MCF 10A (cell line): ENCODE measurements at regions of chr12 and their contacts with region 1.

Region 1: GRCh38 chr12:51923501-51924271 is 16.4 kb downstream of the ACVRL1 start:
- DNase-seq: peak; percentile 44
- H3K4me3 Mint-ChIP-seq: no peak overlapping the region
- H3K27ac Mint-ChIP-seq: no peak overlapping the region
- H3K4me1 Mint-ChIP-seq: peaks cover 5% of the 10 kb centered on the region
- H3K27me3 Mint-ChIP-seq: no peaks in the 10 kb centered on the region
- CTCF ChIP-seq: peak; percentile 81

Region 2: GRCh38 chr12:51891843-51892242 is 31.8 kb before region 1 on chr12:
- CTCF ChIA-PET with region 1: interaction called, 15 read pairs
- POLR2A ChIA-PET with region 1: no interaction called
- intact Hi-C with region 1: loop called (anchors 1 kb)
- DNase-seq: no peak
- H3K4me3 Mint-ChIP-seq: no peak overlapping the region
- H3K27ac Mint-ChIP-seq: no peak overlapping the region
- H3K4me1 Mint-ChIP-seq: no peaks in the 10 kb centered on the region
- H3K27me3 Mint-ChIP-seq: no peaks in the 10 kb centered on the region
- CTCF ChIP-seq: peak; percentile 36

Region 3: DNA sequence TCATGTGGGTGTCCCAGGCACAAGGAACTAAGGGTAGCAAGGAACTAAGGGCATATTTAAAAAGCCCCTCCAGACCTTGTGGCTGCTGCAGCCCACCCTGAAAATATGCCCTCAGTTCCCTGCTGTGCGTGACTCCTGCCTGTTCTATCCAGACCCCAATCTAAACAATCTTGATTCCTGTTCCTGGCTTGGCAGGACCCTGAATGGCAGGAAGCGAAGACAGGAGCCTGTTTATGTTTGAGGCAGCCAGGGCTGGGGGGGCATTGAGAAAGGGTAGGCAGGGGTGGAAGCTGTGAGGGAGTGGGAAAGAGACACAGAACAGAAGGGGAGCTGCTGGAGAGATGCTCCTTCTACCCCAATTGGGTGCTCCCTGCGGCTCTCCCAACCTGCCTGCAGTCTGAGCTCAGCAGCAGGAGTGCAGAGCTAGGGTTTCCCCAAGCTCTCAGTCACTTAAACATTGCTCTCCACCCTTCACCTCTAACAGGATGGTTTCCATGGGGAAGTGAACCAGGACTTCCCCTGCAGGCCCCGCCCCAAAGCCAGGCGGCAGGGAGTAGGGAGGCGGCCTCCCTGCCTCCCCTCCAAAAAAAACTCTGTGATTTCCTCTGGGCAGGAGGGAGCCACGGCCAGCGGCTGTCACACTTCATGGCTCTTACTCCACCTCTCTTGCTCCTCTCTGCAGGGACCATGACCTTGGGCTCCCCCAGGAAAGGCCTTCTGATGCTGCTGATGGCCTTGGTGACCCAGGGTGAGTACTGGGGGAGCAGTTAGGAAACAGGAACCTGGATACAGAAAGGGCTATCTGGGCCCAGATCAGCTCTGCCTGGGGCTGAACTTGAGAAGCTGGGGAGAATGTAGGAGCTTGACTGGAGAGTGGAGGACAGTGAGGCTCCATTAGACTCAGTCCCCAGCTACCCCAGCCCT is 11.6 kb before region 1 on chr12:
- CTCF ChIA-PET with region 1: interaction called, 32 read pairs
- POLR2A ChIA-PET with region 1: no interaction called
- intact Hi-C with region 1: no loop called
- DNase-seq: no peak
- H3K4me3 Mint-ChIP-seq: no peak overlapping the region
- H3K27ac Mint-ChIP-seq: no peak overlapping the region
- H3K4me1 Mint-ChIP-seq: peaks cover 5% of the 10 kb centered on the region
- H3K27me3 Mint-ChIP-seq: no peaks in the 10 kb centered on the region
- CTCF ChIP-seq: no peak

Region 4: DNA sequence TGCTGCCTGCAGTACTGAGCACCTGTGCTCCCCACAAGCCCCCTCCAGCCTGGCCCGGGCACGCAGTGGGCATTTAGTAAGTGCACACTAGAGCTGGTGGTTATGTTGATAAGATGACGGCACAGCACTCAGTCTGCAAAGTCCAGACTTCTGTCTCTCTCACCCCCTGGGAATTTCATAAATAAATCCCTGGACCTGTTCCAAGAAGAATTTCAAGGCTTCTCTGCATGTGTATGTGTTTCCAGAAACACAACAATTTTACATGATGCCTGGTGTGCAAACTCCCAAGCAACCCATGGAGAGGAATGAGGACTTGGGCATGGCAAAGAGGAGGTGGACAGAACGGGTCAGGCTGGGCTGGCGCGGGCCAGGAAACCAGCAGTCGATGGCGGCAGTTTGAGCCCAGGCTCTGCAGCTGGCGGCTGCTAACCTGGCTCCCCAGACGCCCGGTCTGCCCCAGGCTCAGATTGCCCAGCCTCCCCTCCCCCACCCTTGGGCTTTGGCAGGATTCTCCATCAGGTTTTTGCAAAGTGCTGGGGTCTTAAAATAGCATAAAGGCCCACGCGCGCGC is 17.4 kb after region 1 on chr12:
- CTCF ChIA-PET with region 1: interaction called, 11 read pairs
- POLR2A ChIA-PET with region 1: no interaction called
- intact Hi-C with region 1: no loop called
- DNase-seq: no peak
- H3K4me3 Mint-ChIP-seq: no peak overlapping the region
- H3K27ac Mint-ChIP-seq: no peak overlapping the region
- H3K4me1 Mint-ChIP-seq: peaks cover 7% of the 10 kb centered on the region
- H3K27me3 Mint-ChIP-seq: no peaks in the 10 kb centered on the region
- CTCF ChIP-seq: no peak

Region 5: GRCh38 chr12:51980051-51980808 is 56.5 kb after region 1 on chr12:
- CTCF ChIA-PET with region 1: interaction called, 20 read pairs
- POLR2A ChIA-PET with region 1: no interaction called
- intact Hi-C with region 1: loop called (anchors 1 kb)
- DNase-seq: peak; percentile 80
- H3K4me3 Mint-ChIP-seq: no peak overlapping the region
- H3K27ac Mint-ChIP-seq: no peak overlapping the region
- H3K4me1 Mint-ChIP-seq: no peaks in the 10 kb centered on the region
- H3K27me3 Mint-ChIP-seq: no peaks in the 10 kb centered on the region
- CTCF ChIP-seq: peak; percentile 86

Region 6: GRCh38 chr12:52006726-52007157 is 83.1 kb after region 1 on chr12 and contains the start of gene TAMALIN:
- CTCF ChIA-PET with region 1: no interaction called
- POLR2A ChIA-PET with region 1: no interaction called
- intact Hi-C with region 1: no loop called
- DNase-seq: no peak
- H3K4me3 Mint-ChIP-seq: no peak within 1 kb of the TSS
- H3K27ac Mint-ChIP-seq: no peak within 1 kb of the TSS
- H3K4me1 Mint-ChIP-seq: no peaks in the 10 kb centered on the region
- H3K27me3 Mint-ChIP-seq: peaks cover 20% of the 10 kb centered on the region
- CTCF ChIP-seq: no peak
- total RNA-seq, gene TAMALIN: 0.39 TPM in 1 of 2 replicates, not detected in the other